Activated T-helper 2 cell treated with anti-CD3 and anti-CD28 coated beads, Interferon-gamma antibody, Interleukin-2, Interleukin-4, amounts not matched to agents 10 μg/mL and 5 μg/mL and 100 μg/mL, durations not matched to agents 14 hours and 24 hours and 36 hours (primary cell): ENCODE measurements at regions of chrX and their contacts with region 1.

Region 1: DNA sequence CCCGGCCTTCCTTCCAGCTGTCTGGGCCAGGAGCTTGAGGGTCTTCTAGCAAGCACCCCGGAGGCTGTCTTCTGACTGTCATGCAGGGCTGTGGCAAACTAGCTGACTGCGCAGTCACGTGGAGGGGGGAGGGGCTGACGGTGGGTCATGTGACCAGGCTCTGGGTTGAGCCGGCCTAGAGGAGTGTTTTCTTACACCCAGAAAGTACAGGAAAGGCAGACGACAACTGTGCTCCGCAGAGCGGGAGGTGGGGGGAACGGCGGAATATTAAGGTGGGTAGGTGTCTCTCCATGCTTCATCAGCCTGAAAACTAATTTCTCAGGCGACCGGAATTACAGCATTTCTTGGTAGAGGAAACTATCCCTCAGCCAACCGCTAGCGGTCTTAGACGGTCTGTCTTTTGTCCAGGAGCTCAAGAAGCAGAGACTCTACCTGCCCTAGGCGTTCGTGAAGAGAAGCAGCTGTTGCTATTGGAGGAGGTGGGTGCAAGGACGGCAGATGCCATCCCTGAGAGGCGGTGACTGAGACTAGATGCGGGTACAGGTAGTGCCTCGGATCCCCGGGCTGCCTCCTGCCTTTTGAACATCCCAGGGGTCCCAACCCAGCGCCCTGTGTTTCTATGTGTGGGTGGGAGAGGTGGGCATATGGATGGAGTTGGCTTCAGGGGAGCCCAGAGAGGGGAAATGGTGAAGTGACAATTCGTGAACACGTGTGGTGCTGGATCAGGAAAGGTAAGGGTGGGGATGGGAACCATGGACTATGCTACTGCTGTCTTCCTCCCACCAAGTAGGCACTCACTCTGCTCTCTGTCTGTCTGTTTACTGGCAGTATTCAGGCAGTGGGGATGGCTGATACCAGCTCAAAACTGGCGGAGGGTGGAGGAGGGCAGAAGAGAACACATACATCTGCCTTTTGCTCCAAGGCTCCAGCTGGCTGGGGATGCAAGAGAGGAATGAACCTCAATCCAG is 8.8 kb downstream of the GPRASP1 start:
- DNase-seq: peak; percentile 72
- H3K4me3 Mint-ChIP-seq: peak overlapping the region; percentile 88
- H3K27ac Mint-ChIP-seq: peak overlapping the region; percentile 69
- H3K4me1 Mint-ChIP-seq: peaks cover 7% of the 10 kb centered on the region
- H3K27me3 Mint-ChIP-seq: peaks cover 3% of the 10 kb centered on the region

Region 2: GRCh38 chrX:102672856-102673255 is 12.8 kb after region 1 on chrX:
- intact Hi-C with region 1: no loop called
- DNase-seq: no peak
- H3K4me3 Mint-ChIP-seq: no peak overlapping the region
- H3K27ac Mint-ChIP-seq: no peak overlapping the region
- H3K4me1 Mint-ChIP-seq: no peaks in the 10 kb centered on the region
- H3K27me3 Mint-ChIP-seq: no peaks in the 10 kb centered on the region

Region 3: GRCh38 chrX:102720237-102721168 is 60.4 kb after region 1 on chrX and contains the start of gene GPRASP3:
- intact Hi-C with region 1: loop called (anchors 5 kb)
- DNase-seq: peak; percentile 64
- H3K4me3 Mint-ChIP-seq: peak within 1 kb of the TSS; percentile 82
- H3K27ac Mint-ChIP-seq: peak within 1 kb of the TSS; percentile 53
- H3K4me1 Mint-ChIP-seq: peaks cover 9% of the 10 kb centered on the region
- H3K27me3 Mint-ChIP-seq: no peaks in the 10 kb centered on the region
- total RNA-seq, gene GPRASP3: 0.71 and 1.4 TPM in 2 replicates

Region 4: DNA sequence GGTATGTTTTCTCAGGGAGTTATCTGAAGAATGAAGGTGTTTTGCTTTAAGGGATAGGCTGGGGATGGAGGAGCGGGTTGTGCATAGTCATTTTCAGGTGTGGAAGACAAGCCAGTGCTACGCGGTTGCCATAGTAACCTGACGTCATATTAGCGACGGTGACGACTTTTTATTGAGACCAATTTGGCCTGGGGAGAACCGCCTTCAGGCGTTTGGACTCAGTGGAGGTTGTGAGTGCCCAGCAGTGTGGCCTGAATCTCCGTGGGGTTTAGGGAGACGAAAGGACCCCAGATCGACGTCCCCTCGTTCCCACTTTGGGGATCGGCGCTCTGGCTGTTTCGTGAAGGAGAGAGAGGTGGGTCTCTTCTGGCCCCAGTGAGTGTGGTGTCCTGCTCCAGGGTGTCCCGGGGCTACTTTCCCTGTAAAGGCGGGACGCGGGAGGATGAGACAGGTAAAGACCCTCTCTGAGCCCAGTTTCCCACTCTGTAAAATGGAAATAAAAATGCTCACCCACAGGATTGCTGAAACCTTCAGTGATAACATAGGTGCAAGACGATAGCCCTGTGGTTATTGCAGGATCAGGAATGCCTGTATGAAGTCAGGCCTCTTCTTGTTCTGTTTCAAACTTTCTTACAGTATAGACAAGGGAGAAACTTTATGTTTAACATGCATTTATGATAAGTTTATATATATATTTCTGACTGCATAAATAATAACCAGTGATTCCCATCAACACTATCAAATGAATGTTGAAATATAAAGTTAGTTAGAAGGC is 109.1 kb after region 1 on chrX:
- intact Hi-C with region 1: loop called (anchors 5 kb)
- DNase-seq: peak; percentile 75
- H3K4me3 Mint-ChIP-seq: peak overlapping the region; percentile 97
- H3K27ac Mint-ChIP-seq: peak overlapping the region; percentile 96
- H3K4me1 Mint-ChIP-seq: peaks cover 11% of the 10 kb centered on the region
- H3K27me3 Mint-ChIP-seq: no peaks in the 10 kb centered on the region